ENCODE measurements at regions of chr1 and their contacts with region 1.

Region 1: GRCh38 chr1:51341876-51342496 is 11.6 kb upstream of the TTC39A start:
- DNase-seq: no peak
- H3K4me3 Mint-ChIP-seq: no peak overlapping the region
- H3K27ac Mint-ChIP-seq: no peak overlapping the region
- H3K4me1 Mint-ChIP-seq: no peaks in the 10 kb centered on the region
- H3K27me3 Mint-ChIP-seq: peaks cover 32% of the 10 kb centered on the region

Region 2: GRCh38 chr1:51535006-51535592 is 193.1 kb after region 1 on chr1:
- intact Hi-C with region 1: loop called (anchors 10 kb)
- DNase-seq: no peak
- H3K4me3 Mint-ChIP-seq: no peak overlapping the region
- H3K27ac Mint-ChIP-seq: no peak overlapping the region
- H3K4me1 Mint-ChIP-seq: peaks cover 14% of the 10 kb centered on the region
- H3K27me3 Mint-ChIP-seq: peaks cover 2% of the 10 kb centered on the region

Measured in activated T-helper 1 cell treated with anti-CD3 and anti-CD28 coated beads, Interleukin-12 subunit alpha, Interleukin-12 subunit beta, Interleukin-2, Interleukin-4 antibody, amounts not matched to agents 30 ng/mL and 10 ng/mL and 1 ng/mL, durations not matched to agents 14 hours and 24 hours and 36 hours (primary cell).